ENCODE measurements at regions of chr10 and their contacts with region 1.

Region 1: DNA sequence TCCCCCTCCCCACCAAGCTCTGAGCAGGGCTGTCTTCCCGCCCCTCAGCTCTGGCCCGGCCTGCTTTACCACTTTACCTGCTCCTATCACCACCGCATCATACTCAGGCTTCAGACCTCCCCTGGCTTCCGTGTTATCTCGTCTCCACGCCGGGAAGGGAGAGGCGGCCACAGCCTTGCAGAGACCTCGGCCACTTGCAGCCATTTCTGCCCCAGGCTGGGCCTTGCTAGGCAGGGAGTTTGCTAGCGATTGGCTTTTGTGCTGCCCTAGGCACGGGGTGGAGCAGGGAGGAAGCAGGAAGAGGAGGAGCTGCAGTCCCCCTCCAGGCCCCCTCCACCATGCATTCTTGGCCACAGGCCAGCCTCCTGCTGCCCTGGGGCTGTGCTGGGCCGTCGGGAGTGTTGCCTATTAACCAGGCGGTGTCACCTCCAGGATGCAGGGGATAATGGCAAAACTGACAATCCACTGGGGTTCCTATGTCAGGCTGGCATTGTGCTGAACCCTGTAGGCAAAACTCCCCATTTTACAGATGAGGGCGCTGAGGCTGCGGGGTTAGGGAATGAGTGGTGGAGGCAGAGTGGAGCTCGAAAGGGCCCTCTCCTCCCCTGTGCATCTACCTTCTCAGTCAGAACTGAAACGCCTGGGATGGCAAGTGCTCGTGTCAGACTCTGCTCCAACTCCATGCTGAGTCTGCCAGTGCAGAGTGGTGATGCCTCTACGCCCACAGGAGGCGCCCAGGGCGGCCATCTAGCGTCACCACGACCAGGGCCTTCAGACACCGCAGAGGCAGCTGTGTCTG is at the start of gene PYROXD2:
- DNase-seq: peak; percentile 91 to 96
- H3K4me3 ChIP-seq: peak within 1 kb of the TSS; percentile 63 to 71
- H3K27ac ChIP-seq: peak within 1 kb of the TSS; percentile 77 to 83
- H3K4me1 ChIP-seq: peaks cover 0 to 38% (median 16%) of the 10 kb centered on the region in 4 donors
- H3K27me3 ChIP-seq: no peaks in the 10 kb centered on the region
- CTCF ChIP-seq: no peak

Region 2: GRCh38 chr10:98262571-98262970 is 152.6 kb before region 1 on chr10:
- intact Hi-C with region 1: loop called (anchors 10 kb)
- DNase-seq: no peak
- H3K4me3 ChIP-seq: no peak overlapping the region
- H3K27ac ChIP-seq: no peak overlapping the region
- H3K4me1 ChIP-seq: peaks cover 0 to 47% (median 31%) of the 10 kb centered on the region in 4 donors
- H3K27me3 ChIP-seq: no peaks in the 10 kb centered on the region
- CTCF ChIP-seq: peak; percentile 37 to 45